GM12878 (cell line): ENCODE measurements at regions of chr6 and their contacts with region 1.

Region 1: DNA sequence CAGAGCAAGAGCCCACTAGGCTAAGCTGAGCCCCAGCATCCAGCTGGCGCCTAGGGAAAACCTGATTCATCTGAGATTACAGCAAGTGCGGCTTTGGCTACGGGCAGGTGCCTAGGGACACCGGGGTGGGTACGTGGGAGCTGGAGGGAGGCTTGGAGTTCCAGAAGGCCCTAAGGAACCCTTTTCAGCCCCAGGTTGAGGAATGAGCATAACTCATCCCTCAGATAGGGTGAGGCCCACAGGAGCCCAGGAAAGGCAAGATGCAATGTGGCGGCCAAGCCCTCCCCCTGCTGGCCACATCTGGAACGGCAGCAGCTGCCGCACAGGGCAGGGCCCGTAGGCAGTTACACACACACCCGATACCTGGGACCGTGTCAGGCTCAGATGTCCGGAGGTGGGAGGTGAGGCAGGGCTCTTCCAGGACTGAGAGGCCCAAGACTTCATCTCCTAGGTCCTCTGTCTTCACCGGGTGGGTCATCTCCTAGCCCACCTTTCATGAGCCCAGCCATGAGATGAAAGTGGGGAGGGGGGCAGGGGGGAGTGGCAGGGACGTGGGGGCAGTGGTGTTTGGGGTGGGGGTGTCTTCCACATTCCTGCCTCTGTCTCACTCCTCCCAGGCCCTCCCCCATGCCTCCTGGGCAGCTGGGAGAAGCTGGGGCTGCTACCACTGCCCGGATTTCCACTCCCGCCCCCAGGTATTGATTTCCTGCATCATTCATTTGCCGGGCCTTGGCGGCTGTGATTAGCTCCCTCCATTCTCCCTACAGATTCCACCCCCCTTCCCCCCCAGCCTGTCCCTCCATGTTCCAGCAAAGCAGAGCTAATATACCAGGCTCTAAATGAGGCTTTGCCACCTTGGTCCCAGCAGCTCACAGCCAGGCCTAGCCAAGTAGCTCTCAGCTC is 5.5 kb downstream of the MDGA1 start:
- DNase-seq: no peak
- ATAC-seq: peak; percentile 87
- H3K4me3 ChIP-seq: no peak overlapping the region
- H3K27ac ChIP-seq: no peak overlapping the region
- H3K4me1 ChIP-seq: peaks cover 11% of the 10 kb centered on the region
- H3K27me3 ChIP-seq: peaks cover 17 to 18% of the 10 kb centered on the region in 2 experiments
- CTCF ChIP-seq: peak; percentile 97 to 99 (median 98)
- EP300 ChIP-seq: no peak
- POLR2A ChIP-seq: no peak
- RAD21 ChIP-seq: peak; percentile 95

Region 2: DNA sequence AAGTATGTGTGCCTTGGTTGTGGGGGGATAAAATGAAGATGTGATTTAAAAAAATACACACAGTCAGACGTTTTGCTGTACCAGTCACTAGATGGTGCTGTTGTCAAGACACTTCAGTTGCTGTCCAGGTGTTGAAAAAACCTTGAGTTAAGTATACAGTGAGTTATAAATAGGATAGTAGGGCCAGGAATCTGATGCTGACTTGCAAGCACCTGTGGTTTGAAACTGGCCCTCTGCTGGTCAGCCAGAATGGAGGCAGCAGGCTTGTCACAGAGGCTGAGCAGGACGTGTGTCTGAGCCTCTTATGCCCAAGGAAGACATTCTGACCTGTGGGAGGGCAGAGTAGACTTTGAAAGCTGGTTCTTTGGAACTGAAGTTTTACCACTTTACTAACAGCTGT is 310.6 kb before region 1 on chr6:
- CTCF ChIA-PET with region 1: interaction called, 3 read pairs
- POLR2A ChIA-PET with region 1: no interaction called
- RAD21 ChIA-PET with region 1: interaction called, 10 read pairs
- SMC1A ChIA-PET with region 1: interaction called, 6 read pairs
- in situ Hi-C with region 1: no loop called
- intact Hi-C with region 1: loop called (anchors 5 kb)
- DNase-seq: peak; percentile 32
- ATAC-seq: peak; percentile 87
- H3K4me3 ChIP-seq: no peak overlapping the region
- H3K27ac ChIP-seq: no peak overlapping the region
- H3K4me1 ChIP-seq: peaks cover 3% of the 10 kb centered on the region; the same call in 1 of the 2 replicates
- H3K27me3 ChIP-seq: no peaks in the 10 kb centered on the region
- CTCF ChIP-seq: peak; percentile 72 to 85 (median 83)
- EP300 ChIP-seq: no peak
- POLR2A ChIP-seq: no peak
- RAD21 ChIP-seq: peak; percentile 76

Region 3: GRCh38 chr6:37489660-37490361 is 202.3 kb before region 1 on chr6:
- CTCF ChIA-PET with region 1: interaction called, 18 read pairs
- POLR2A ChIA-PET with region 1: no interaction called
- RAD21 ChIA-PET with region 1: interaction called, 6 read pairs
- SMC1A ChIA-PET with region 1: interaction called, 5 read pairs
- in situ Hi-C with region 1: no loop called
- intact Hi-C with region 1: no loop called
- DNase-seq: no peak
- ATAC-seq: peak; percentile 54
- H3K4me3 ChIP-seq: no peak overlapping the region
- H3K27ac ChIP-seq: peak overlapping the region; percentile 69
- H3K4me1 ChIP-seq: peaks cover 58% of the 10 kb centered on the region
- H3K27me3 ChIP-seq: no peaks in the 10 kb centered on the region
- CTCF ChIP-seq: peak; percentile 11 to 35 (median 14); a peak in 4 of 6 replicates
- EP300 ChIP-seq: no peak
- POLR2A ChIP-seq: 0 out of 2 replicates have a peak, but pooled peaks have one; percentile 9
- RAD21 ChIP-seq: no peak

Region 4: DNA sequence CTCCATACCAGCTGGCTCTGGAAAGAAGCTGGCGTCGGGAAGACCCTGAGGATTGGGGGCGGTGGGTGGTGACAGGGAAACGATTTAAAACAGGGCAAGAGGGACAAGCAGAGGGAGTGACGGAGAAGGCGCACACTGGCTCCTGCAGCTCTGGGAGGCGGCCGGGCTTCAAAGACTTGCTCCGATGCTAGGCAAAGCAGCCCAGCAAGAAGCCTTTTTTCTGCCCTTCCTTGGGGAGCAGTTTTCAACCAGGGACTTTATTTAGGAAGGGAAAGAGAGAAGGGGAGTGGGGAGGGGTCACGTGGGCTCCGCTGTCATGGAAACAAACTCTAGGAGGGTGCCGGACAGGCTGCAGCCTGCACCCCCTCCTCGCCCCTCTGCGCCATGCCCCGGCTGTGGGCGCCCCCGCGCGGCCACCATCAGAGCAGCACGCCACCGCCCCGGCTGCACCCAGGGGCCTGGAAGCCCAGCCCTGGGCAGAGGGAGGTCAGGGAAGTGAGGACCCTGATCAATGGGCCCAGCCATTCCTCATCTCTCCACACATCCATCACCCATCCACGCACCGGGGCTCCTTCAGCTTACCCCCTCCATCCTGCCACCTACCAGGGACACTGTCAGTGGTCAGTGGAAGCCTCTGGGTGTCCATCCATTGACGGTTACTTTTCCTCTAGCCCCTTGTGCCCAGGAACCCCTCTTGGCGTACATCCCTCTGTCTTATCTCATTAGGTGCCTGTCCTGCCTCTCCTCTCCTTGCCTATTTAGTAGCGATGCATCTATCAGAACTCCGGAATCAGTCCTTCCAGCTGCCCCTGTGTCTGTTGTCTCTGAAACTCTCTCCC is 125.8 kb before region 1 on chr6:
- CTCF ChIA-PET with region 1: interaction called, 24 read pairs
- POLR2A ChIA-PET with region 1: no interaction called
- RAD21 ChIA-PET with region 1: interaction called, 7 read pairs
- SMC1A ChIA-PET with region 1: interaction called, 14 read pairs
- in situ Hi-C with region 1: no loop called
- intact Hi-C with region 1: loop called (anchors 5 kb)
- DNase-seq: no peak
- ATAC-seq: peak; percentile 73
- H3K4me3 ChIP-seq: peak overlapping the region; percentile 61
- H3K27ac ChIP-seq: peak overlapping the region; percentile 91
- H3K4me1 ChIP-seq: peaks cover 52% of the 10 kb centered on the region
- H3K27me3 ChIP-seq: no peaks in the 10 kb centered on the region
- CTCF ChIP-seq: peak; percentile 86 to 97 (median 89)
- EP300 ChIP-seq: no peak
- POLR2A ChIP-seq: no peak
- RAD21 ChIP-seq: peak; percentile 93

Region 5: DNA sequence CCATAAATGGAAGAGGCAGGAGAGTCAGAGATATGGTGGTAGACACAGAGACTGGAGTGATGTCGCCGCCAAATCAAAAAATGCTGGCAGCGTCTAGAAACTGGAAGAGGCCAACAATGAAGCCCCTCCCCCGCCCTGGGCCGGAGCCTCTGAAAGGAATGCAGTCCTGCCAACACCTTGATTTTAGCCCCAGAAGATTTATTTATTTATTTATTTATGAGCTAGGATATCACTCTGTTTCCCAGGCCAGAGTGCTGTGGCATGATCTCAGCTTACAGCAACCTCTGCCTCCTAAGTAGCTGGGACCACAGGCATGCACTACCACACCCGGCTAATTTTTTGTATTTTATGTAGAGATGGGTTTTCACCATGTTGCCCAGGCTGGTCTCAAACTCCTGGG is 109.8 kb before region 1 on chr6:
- CTCF ChIA-PET with region 1: interaction called, 38 read pairs
- POLR2A ChIA-PET with region 1: no interaction called
- RAD21 ChIA-PET with region 1: interaction called, 4 read pairs
- SMC1A ChIA-PET with region 1: interaction called, 7 read pairs
- in situ Hi-C with region 1: no loop called
- intact Hi-C with region 1: loop called (anchors 5 kb)
- DNase-seq: no peak
- ATAC-seq: no peak
- H3K4me3 ChIP-seq: no peak overlapping the region
- H3K27ac ChIP-seq: no peak overlapping the region
- H3K4me1 ChIP-seq: no peaks in the 10 kb centered on the region
- H3K27me3 ChIP-seq: no peaks in the 10 kb centered on the region; a peak in 1 of 4 replicates
- CTCF ChIP-seq: no peak
- EP300 ChIP-seq: no peak
- POLR2A ChIP-seq: no peak
- RAD21 ChIP-seq: no peak

Region 6: GRCh38 chr6:37705239-37706051 is 13.3 kb after region 1 on chr6:
- CTCF ChIA-PET with region 1: interaction called, 10 read pairs
- POLR2A ChIA-PET with region 1: no interaction called
- RAD21 ChIA-PET with region 1: interaction called, 5 read pairs
- SMC1A ChIA-PET with region 1: interaction called, 5 read pairs
- in situ Hi-C with region 1: no loop called
- intact Hi-C with region 1: no loop called
- DNase-seq: peak; percentile 30
- ATAC-seq: peak; percentile 94
- H3K4me3 ChIP-seq: peak overlapping the region; percentile 38
- H3K27ac ChIP-seq: no peak overlapping the region; the same call in 1 of the 2 replicates
- H3K4me1 ChIP-seq: peaks cover 5% of the 10 kb centered on the region
- H3K27me3 ChIP-seq: peaks cover 0 to 3% of the 10 kb centered on the region in 2 experiments; a peak in 1 of 4 replicates
- CTCF ChIP-seq: peak; percentile 73 to 77 (median 75)
- EP300 ChIP-seq: no peak
- POLR2A ChIP-seq: peak; percentile 40
- RAD21 ChIP-seq: peak; percentile 64

Region 7: GRCh38 chr6:38307740-38308139 is 615.6 kb after region 1 on chr6:
- CTCF ChIA-PET with region 1: no interaction called
- POLR2A ChIA-PET with region 1: no interaction called
- RAD21 ChIA-PET with region 1: no interaction called
- SMC1A ChIA-PET with region 1: no interaction called
- in situ Hi-C with region 1: no loop called
- intact Hi-C with region 1: no loop called
- DNase-seq: peak; percentile 72
- ATAC-seq: peak; percentile 90
- H3K4me3 ChIP-seq: peak overlapping the region; percentile 13; the same call in 1 of the 2 replicates
- H3K27ac ChIP-seq: peak overlapping the region; percentile 82
- H3K4me1 ChIP-seq: peaks cover 40% of the 10 kb centered on the region
- H3K27me3 ChIP-seq: no peaks in the 10 kb centered on the region
- CTCF ChIP-seq: no peak
- EP300 ChIP-seq: peak in 1 of 2 experiments; percentile 42; a peak in 1 of 4 replicates
- POLR2A ChIP-seq: no peak
- RAD21 ChIP-seq: 0 out of 2 replicates have a peak, but pooled peaks have one; percentile 4

Region 8: DNA sequence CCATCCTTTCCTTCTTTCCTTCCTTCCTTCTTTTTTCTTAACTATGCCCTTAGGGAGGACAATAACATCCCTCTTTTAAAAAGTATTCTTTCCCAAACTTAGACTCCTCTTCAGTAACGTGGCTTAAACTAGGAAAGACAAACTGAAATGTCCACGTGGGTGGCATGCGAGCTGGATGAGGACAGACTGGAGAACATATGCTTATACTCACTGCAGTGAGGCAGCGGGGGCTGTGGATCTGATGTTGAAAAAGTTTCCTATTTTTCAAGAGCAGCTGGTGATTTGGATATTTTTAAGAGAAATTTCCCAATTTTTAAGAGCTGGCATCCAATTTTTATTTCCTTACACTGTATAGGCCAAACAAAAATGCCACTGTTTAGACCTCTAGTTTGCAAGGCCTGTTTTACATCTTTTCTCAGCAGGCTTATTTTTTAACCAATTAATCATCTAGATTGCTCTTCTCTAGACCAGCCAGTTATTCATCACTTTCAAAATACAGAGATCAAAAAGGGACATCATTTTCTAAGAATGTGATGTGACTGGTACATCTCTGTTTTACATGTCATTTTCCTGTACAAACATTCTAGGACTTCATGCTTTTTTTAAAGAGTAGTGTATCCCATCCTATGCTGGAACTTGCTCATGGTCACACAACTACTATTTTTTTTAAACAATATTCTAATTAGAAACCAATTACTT is 721.1 kb after region 1 on chr6:
- CTCF ChIA-PET with region 1: no interaction called
- POLR2A ChIA-PET with region 1: no interaction called
- RAD21 ChIA-PET with region 1: no interaction called
- SMC1A ChIA-PET with region 1: no interaction called
- in situ Hi-C with region 1: no loop called
- intact Hi-C with region 1: no loop called
- DNase-seq: no peak
- ATAC-seq: no peak
- H3K4me3 ChIP-seq: no peak overlapping the region
- H3K27ac ChIP-seq: no peak overlapping the region
- H3K4me1 ChIP-seq: peaks cover 22% of the 10 kb centered on the region
- H3K27me3 ChIP-seq: no peaks in the 10 kb centered on the region
- CTCF ChIP-seq: no peak
- EP300 ChIP-seq: no peak
- POLR2A ChIP-seq: no peak
- RAD21 ChIP-seq: no peak

Region 9: DNA sequence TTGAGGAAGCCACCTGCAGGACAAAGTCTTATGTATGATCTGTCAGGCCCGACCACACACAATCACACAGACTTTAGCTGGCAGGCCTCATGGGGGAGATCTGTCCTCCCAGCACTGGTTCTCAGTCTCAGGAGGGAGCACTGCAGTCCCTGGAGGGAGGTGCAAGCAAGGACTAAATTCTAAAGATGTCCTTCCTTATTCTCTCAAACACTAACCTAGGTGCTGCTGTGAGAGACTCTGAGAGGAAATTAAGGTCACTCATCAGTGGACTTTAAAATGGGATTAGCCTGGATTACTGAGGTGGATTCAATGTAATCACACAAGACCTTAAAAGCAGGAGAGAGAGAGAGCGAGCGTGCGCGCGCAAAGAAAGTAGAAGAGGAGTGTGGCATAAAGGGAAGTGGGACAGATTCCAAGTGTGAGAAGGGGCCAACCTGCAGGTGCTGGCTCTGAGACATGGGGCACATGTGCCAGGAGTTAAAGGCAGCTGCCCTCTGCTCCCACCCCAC is 996.5 kb after region 1 on chr6:
- CTCF ChIA-PET with region 1: no interaction called
- POLR2A ChIA-PET with region 1: no interaction called
- RAD21 ChIA-PET with region 1: no interaction called
- SMC1A ChIA-PET with region 1: no interaction called
- in situ Hi-C with region 1: no loop called
- intact Hi-C with region 1: no loop called
- DNase-seq: peak; percentile 59
- ATAC-seq: peak; percentile 96
- H3K4me3 ChIP-seq: peak overlapping the region; percentile 28; the same call in 1 of the 2 replicates
- H3K27ac ChIP-seq: peak overlapping the region; percentile 65
- H3K4me1 ChIP-seq: peaks cover 13% of the 10 kb centered on the region
- H3K27me3 ChIP-seq: no peaks in the 10 kb centered on the region
- CTCF ChIP-seq: peak in 2 of 3 experiments; percentile 12 to 18; a peak in 2 of 6 replicates
- EP300 ChIP-seq: no peak
- POLR2A ChIP-seq: no peak
- RAD21 ChIP-seq: no peak